A673 (cell line): ENCODE measurements at regions of chr17 and their contacts with region 1.

Region 1: GRCh38 chr17:64630315-64631223 is 31.5 kb downstream of the SMURF2 start:
- DNase-seq: no peak
- H3K4me3 ChIP-seq: no peak overlapping the region
- H3K27ac ChIP-seq: no peak overlapping the region
- H3K4me1 ChIP-seq: peaks cover 11% of the 10 kb centered on the region
- H3K27me3 ChIP-seq: no peaks in the 10 kb centered on the region
- CTCF ChIP-seq: no peak

Region 2: GRCh38 chr17:64565563-64565962 is 65.0 kb before region 1 on chr17:
- CTCF ChIA-PET with region 1: no interaction called
- POLR2A ChIA-PET with region 1: interaction called, 12 read pairs
- intact Hi-C with region 1: no loop called
- DNase-seq: no peak
- H3K4me3 ChIP-seq: no peak overlapping the region
- H3K27ac ChIP-seq: no peak overlapping the region
- H3K4me1 ChIP-seq: no peaks in the 10 kb centered on the region
- H3K27me3 ChIP-seq: no peaks in the 10 kb centered on the region
- CTCF ChIP-seq: no peak